ENCODE measurements at regions of chrX and their contacts with region 1.

Region 1: DNA sequence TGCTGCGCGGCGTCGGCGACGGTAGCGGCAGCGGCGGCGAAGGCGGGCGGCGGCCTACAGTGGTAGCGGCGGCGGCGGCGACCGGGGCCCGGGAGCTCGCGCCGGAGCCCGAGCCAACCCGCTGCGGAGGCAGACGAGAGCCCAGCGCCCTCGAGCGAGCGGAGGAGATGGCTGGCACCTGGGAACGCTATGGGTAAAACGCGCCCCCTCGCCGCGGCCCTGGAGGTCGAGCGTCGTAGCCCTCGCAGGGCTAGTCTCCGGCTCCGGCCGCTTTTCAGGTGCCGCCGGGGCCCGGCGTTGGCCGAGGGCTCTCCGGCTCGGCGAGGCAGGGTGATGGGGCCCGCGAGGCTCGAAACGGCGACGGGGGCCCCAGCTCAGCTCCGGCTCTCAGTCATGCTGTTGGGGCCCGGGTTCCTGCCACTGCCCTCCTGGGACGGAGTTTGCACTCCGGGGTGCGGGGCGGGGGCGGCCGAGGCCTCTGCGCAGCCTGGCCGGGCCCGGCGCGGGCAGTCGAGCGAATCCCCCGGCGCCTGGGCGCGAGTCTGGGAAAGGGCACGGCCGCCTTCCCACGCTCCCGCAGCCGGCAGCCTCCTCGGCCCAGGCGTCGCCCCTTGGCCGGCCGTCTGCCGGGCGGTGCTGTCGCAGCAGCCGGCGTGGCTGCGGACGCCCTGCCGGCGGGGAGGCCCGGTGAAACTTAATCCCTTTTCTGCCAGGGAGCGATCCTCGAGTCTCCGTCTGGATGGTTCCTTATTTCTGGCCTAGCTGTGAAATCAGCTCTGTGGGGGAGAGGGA is 768 bp downstream of the MID2 start:
- DNase-seq: peak; percentile 14
- H3K4me3 Mint-ChIP-seq: peak overlapping the region; percentile 77
- H3K27ac Mint-ChIP-seq: peak overlapping the region; percentile 73
- H3K4me1 Mint-ChIP-seq: peaks cover 53% of the 10 kb centered on the region
- H3K27me3 Mint-ChIP-seq: no peaks in the 10 kb centered on the region

Region 2: GRCh38 chrX:107741404-107741790 is 85.0 kb before region 1 on chrX:
- CTCF ChIA-PET with region 1: interaction called, 3 read pairs
- intact Hi-C with region 1: loop called (anchors 1 kb)
- DNase-seq: no peak
- H3K4me3 Mint-ChIP-seq: peak overlapping the region; percentile 77
- H3K27ac Mint-ChIP-seq: peak overlapping the region; percentile 94
- H3K4me1 Mint-ChIP-seq: peaks cover 40% of the 10 kb centered on the region
- H3K27me3 Mint-ChIP-seq: no peaks in the 10 kb centered on the region

Region 3: DNA sequence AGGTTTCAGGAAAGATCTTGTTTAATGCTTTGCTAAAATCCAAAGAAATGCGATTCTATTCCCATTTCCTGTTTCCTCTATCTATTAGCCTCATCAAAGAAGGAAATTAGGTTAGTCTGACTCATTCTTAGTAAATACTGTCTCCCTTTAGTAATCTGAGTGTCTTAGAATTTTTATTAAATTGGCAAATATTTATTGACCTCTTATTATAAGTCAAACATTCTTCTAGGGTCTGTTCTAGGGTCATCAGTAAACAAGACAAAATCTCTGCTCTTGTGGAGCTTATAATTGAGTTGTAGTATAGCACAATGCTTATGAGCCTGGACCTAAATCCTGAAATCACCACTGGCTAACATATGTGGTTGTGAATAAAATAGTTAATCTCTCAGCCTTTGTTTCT is 11.7 kb before region 1 on chrX:
- CTCF ChIA-PET with region 1: no interaction called
- intact Hi-C with region 1: no loop called
- DNase-seq: no peak
- H3K4me3 Mint-ChIP-seq: no peak overlapping the region
- H3K27ac Mint-ChIP-seq: no peak overlapping the region
- H3K4me1 Mint-ChIP-seq: peaks cover 4% of the 10 kb centered on the region
- H3K27me3 Mint-ChIP-seq: no peaks in the 10 kb centered on the region

Region 4: GRCh38 chrX:107849740-107850421 is 23.4 kb after region 1 on chrX:
- CTCF ChIA-PET with region 1: no interaction called
- intact Hi-C with region 1: loop called (anchors 1 kb)
- DNase-seq: peak; percentile 46
- H3K4me3 Mint-ChIP-seq: no peak overlapping the region
- H3K27ac Mint-ChIP-seq: peak overlapping the region; percentile 54
- H3K4me1 Mint-ChIP-seq: no peaks in the 10 kb centered on the region
- H3K27me3 Mint-ChIP-seq: no peaks in the 10 kb centered on the region

Region 5: DNA sequence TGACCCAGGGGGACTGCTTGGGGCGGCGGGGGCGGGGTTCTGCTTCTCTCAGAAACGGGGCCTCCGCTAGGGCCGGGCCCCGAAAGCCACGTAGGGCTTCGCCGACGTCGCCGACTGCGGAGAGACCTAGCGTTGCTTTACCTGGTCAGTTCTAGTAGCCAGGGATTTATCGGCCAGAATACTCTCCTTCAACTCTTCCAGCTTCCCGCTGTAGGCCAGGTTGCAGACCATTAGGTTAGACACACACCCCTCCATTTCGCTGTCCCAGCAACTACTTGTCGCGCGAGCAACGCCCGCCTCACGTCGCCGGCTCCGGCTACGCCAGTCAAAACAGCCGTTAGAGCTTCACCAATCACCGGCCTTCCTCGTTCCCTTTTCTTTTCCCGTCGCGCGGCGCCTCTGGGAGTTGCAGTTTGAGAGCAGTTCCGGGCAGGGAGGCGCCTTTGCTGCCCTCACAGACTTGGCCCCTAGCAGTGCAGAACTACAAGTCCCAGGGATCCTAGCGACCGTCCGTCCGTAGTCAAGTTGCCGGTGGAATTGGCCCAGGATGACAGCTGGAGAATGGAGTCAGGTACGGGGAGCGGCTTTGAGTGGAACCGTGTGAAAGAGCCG is 264.9 kb after region 1 on chrX and contains the starts of genes ATG4A and PSMD10:
- CTCF ChIA-PET with region 1: no interaction called
- intact Hi-C with region 1: loop called (anchors 5 kb)
- DNase-seq: peak; percentile 94
- H3K4me3 Mint-ChIP-seq: no peak within 1 kb of the TSS
- H3K27ac Mint-ChIP-seq: no peak within 1 kb of the TSS
- H3K4me1 Mint-ChIP-seq: peaks cover 19% of the 10 kb centered on the region
- H3K27me3 Mint-ChIP-seq: no peaks in the 10 kb centered on the region
- total RNA-seq, gene ATG4A: 8.2 to 8.6 TPM
- total RNA-seq, gene PSMD10: 54.6 to 58.8 TPM

Measured in activated naive CD4-positive, alpha-beta T cell treated with anti-CD3 and anti-CD28 coated beads for 36 hours (primary cell).